ENCODE measurements at regions of chr19 and their contacts with region 1.

Region 1: DNA sequence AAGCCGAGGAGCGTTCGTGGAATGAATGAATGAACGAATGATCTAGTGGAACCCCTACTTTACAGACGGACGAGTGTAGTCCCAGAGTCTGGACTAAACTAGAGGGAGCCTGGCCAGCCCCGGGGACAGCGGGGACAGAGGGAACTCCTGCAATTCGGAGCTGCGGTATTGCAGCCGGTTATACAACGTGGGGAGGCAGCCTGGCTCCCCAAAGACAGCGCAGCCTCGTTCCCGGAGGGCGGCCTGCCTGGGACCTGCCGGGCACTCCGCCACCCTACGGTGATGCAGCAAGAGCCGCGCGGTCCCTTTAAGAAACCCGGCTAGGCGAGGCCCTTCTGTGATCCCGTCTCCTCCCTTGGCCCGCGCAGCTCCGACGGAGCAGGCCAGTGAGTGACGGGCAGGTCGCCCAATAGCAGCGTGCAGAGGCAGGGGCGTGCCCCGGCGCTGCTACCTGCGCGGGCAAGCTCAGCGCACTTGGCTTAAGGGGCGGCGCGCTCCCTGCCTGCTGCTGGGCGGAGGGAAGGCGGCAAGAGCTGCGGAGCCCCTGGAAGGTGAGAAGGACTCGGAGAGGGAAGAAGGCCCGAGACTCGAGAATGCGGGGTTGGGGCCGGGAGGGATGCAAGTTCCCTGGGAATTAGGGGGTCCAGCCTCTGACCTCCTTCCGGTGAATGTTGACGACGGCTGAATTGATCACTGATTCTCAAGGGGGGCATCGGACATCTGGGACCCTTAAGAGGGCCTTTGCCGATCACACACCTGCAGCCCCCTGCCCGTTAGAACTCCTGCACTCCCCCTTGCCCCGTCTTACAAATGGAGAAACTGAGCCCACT is at the start of gene ABCA7:
- DNase-seq: peak; percentile 98 to 99
- ATAC-seq: peak; percentile 89 to 92 (median 91)
- H3K4me3 ChIP-seq: peak within 1 kb of the TSS; percentile 74
- H3K27ac ChIP-seq: peak within 1 kb of the TSS; percentile 82
- H3K4me1 ChIP-seq: peaks cover 32% of the 10 kb centered on the region
- H3K27me3 ChIP-seq: no peaks in the 10 kb centered on the region
- CTCF ChIP-seq: no peak
- total RNA-seq, gene ABCA7: 5.2 to 19.5 (median 16.5) TPM

Region 2: DNA sequence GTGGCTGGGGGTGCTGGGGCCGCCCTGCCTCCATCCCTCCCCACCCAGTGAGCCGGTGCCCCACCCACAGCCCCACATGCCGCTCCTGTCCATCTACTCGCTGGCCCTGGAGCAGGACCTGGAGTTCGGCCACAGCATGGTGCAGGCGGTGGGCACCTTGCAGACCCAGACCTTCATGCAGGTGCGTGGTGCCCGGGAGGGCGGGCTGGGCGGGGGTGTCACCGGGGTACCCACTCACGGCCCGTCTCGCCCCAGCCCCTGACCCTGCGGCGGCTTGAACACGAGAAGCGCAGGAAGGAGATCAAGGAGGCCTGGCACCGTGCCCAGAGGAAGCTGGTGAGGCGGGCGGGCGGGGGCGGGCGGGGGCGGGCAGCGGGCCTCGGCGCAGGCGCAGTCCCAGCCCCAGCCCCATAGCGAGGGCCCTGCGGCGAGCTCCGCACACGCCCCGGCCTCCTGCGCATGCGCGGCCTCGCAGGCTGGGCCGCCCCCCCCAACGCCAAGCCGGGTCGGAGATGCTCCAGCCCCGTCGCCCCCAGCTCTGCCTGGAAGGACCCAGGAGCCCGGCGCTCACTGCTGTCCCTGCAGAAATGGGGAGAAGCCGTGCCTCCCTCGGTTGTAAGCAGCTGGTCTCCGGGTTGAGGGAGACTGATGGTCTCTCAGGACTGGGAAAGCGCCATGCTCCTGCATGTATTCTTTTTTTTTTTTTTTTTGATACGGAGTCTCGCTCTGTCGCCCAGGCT is 34.9 kb after region 1 on chr19:
- intact Hi-C with region 1: no loop called
- DNase-seq: peak; percentile 83 to 90
- ATAC-seq: peak in 3 of 4 donors; percentile 29 to 56 (median 37)
- H3K4me3 ChIP-seq: peak overlapping the region; percentile 15
- H3K27ac ChIP-seq: no peak overlapping the region
- H3K4me1 ChIP-seq: peaks cover 3% of the 10 kb centered on the region
- H3K27me3 ChIP-seq: peaks cover 0 to 30% (median 14%) of the 10 kb centered on the region in 3 donors
- CTCF ChIP-seq: no peak

Region 3: DNA sequence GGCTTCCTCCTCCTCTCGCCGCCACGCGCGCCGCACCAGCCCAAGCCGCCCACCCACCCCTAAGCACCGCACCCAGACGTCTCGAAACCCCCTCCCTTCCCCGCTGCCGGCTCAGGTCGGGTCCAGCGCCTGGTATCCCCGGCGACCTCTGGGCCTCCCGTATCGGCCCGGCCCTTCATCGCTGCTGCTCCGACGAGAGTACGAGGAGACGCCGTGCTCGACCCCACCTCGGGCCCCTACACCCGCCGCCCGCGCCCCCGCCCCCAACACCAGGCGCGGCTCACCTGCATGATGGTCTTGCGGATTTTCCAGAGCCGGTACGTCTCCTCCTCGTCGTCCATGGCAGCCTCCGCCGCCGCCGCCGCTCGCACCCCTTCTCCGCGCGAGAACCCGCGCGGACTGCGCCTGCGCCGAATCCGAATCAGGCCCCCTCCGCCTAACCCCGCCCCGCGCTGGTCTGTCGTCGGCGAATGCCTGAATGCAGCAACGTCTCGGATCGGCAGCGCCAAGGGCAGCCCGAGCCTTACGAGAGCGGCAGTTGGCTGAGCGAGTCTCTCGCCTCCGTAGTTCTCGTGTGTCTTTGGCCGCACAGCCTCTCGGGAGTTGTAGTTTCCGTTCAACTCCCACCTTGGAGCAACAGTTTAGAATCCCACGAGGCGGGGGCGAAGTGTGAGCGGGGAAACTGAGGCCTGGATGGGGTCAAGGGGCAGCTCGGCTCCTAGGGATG is 55.3 kb after region 1 on chr19 and contains the start of gene POLR2E:
- intact Hi-C with region 1: loop called (anchors 5 kb)
- DNase-seq: peak; percentile 98 to 100
- ATAC-seq: peak; percentile 96 to 98 (median 97)
- H3K4me3 ChIP-seq: peak within 1 kb of the TSS; percentile 78
- H3K27ac ChIP-seq: peak within 1 kb of the TSS; percentile 73
- H3K4me1 ChIP-seq: peaks cover 15% of the 10 kb centered on the region
- H3K27me3 ChIP-seq: no peaks in the 10 kb centered on the region
- CTCF ChIP-seq: no peak
- total RNA-seq, gene POLR2E: 133 to 147 (median 143) TPM